ENCODE measurements at regions of chr1 and their contacts with region 1.

Region 1: DNA sequence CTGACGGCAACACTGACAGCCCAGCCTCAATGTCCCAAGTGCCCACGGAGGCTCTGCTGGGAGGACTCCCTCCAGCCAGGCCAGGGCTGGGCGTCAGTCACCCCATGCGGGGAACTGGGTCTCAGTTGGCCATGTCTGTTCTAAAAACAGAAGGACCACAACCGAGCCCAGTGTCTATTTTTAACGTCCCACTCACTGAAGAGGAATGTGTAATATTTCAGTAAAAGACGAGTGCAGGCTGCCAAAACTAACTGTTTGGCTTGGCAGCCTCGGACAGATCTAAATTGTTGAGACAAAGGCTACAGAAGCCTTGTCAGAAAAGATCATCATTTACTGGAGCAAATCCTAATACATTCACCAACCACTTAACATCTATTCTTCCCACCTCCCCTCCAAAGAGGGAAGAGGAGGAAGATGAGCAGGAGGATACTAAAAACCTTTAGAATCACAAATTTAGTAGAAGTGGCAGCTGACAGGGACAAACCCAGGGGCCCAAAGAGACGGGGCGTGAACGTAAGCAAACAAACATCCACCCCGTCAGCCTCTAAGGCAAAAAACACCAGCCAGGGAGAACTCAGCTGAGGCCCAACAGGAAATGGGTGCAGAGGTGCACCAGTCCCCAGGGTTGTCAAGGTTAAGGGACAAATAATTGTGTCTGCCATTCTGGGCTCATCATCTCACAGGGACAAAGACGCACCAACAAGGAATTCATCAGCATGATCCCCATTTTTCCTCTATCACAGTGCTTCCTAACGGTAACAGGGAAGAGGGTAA is 18.7 kb downstream of the C1orf198 start:
- DNase-seq: peak; percentile 56 to 95
- H3K4me3 ChIP-seq: peak overlapping the region in 1 of 2 donors; percentile 9
- H3K27ac ChIP-seq: peak overlapping the region; percentile 94 to 98
- H3K4me1 ChIP-seq: peaks cover 24 to 66% of the 10 kb centered on the region in 2 donors
- H3K27me3 ChIP-seq: no peaks in the 10 kb centered on the region
- CTCF ChIP-seq: no peak

Region 2: DNA sequence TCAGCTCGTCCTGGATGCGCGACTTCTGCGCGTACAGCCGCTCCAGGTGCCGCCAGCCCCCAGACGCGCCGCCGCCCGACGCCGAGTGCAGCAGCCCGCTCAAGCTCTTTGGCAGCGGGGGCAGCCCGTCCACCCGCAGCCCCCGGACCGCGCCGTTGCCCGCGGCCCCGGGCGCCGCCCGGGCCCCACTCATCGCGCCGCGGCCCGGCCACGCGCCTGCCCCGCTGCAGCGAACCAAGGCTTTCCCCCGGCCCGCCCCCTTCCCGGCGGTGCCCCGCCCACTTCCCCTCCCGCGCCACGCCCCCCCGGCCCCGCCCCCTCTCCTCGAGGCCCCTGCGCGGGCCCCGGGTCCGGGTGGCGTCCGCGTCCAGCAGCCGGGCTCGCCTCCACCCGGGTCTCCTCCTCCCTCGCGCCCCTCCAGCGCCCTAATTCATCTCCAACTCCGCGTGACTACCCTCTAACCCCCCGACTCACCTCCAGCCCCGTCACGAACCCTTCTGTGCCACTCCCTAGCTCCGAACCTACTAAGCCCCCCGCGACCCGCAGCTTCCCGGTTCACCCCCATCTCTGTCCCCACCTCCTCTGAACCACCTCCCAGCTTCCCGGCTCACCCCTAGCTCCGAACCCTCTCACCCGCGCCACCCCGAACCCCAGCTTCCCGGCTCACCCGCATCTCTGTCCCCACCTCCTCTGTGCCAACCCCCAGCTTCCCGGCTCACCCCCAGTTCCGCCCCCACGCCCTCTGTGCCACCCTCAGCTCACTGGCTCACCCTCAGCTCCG is 190.6 kb after region 1 on chr1 and contains the start of gene FAM89A:
- intact Hi-C with region 1: loop called (anchors 5 kb)
- DNase-seq: peak in 1 of 2 donors; percentile 73
- H3K4me3 ChIP-seq: peak within 1 kb of the TSS; percentile 87
- H3K27ac ChIP-seq: peak within 1 kb of the TSS in 1 of 2 donors; percentile 30
- H3K4me1 ChIP-seq: peaks cover 6 to 13% of the 10 kb centered on the region in 2 donors
- H3K27me3 ChIP-seq: no peaks in the 10 kb centered on the region
- CTCF ChIP-seq: no peak
- total RNA-seq, gene FAM89A: 47.5 TPM